ENCODE measurements at regions of chrX and their contacts with region 1.

Region 1: DNA sequence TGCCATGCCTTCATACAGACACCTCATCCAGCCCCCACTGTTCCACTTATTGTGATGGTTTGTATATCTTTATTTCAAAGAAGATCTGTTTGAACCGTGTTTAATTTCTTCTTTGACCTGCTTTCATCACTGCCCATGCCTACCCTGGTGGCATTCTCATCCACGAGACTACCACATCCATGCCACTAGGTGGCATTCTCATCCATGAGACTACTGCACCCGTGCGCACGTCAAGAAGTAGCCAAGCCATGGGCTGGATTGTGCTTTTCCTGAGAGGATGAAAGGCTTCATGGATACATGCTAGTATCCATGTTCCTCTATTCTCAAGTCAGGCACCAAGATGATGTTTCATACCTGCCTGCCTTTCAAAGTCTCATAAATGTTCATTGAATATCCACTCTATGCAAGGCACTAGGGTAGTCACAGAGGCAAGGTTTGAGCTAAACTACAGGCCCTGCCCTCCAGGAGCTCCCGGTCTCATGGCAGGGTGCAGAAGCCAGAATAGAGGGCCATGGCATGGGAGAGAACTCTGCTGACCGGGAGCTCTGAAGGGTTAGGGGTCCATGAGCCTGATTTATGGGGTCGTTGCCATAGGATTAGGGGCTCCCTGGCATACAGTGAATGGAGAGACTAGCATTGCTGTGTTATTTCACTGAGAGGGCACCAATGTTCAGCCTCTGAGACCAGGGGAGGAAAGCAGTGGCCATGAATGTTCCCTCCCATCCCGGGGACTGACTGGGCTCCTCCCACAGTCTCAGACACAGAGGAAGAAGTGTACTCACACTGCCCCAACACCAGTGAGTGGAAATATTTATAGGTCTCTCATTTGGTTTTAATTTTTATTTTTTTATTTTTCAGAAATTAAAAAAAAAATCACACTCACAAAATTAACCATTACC is 24.8 kb upstream of the EOLA2 start:
- DNase-seq: peak; percentile 28
- H3K4me3 ChIP-seq: no peak overlapping the region
- H3K27ac ChIP-seq: no peak overlapping the region
- H3K4me1 ChIP-seq: no peaks in the 10 kb centered on the region
- H3K27me3 ChIP-seq: no peaks in the 10 kb centered on the region
- CTCF ChIP-seq: peak; percentile 46 to 57 (median 50)
- EP300 ChIP-seq: no peak
- POLR2A ChIP-seq: no peak

Region 2: DNA sequence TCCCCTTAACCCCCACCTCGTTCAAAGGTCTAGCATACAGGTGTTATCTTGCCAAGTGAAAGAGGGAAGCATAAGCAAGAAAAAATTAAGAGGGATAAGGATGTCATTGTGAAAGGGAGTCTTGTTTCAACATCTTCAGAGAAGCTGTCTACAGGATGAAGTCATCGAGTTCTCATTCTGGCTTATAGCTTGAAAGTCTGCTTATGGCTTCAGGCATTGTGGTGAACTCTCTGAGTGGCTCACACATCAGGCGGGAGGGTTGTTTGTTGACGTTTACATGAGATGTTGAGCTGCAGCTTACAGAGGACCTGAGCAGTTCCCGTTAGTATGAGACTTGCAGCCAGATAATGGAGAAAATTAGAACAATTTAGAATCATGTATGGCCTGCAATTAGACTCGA is 392.4 kb before region 1 on chrX:
- in situ Hi-C with region 1: no loop called
- intact Hi-C with region 1: no loop called
- DNase-seq: no peak
- H3K4me3 ChIP-seq: no peak overlapping the region
- H3K27ac ChIP-seq: no peak overlapping the region
- H3K4me1 ChIP-seq: no peaks in the 10 kb centered on the region
- H3K27me3 ChIP-seq: no peaks in the 10 kb centered on the region
- CTCF ChIP-seq: no peak
- EP300 ChIP-seq: no peak
- POLR2A ChIP-seq: no peak

Region 3: DNA sequence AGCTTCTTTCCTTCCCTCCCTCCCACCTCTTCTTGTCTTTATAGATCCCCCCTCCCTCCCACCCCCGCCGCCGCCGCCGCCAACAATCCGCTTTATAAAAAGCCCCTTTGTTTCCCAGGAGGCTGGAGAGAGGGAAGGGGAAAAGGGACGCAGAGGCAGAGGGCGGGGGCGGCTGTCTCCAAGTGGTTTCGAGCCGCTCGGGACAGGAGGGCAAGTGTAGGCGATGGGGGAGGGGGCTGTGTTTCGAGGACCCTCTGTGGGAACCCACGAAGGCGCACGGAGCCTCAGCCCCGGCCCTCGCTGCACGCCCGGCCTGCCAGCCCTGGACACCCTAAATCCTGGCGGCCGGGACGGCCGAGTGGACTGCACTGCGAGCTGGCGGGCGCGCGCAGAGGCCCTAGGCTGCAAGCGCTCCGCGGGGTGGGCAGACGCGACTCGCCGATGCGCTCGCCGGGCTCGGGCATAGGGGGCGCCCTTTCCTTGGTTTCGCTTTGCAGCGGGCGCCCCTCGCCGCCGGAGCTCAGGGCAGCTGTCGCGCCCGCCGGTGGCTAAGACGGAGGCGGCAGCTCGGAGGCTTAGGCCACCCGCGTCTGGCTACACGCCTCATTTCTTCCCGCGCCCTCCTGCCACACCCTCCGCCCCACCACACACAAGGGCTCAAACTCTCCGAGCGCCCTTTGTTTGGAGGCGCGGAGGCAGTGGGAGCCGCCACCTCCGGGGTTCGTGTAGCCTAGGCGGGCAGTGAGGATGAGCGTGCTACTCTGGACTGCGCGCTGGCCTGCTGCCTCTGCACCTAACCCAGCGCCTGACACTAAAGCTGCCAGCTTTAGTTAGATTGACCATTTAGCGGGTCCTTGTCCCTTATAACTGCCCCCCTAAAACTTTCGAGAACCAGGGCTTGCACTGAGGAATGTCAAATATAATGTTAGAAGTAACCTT is 402.2 kb after region 1 on chrX:
- in situ Hi-C with region 1: loop called in 2 of 4 experiments (anchors 25 kb)
- intact Hi-C with region 1: no loop called
- DNase-seq: peak; percentile 65
- H3K4me3 ChIP-seq: peak overlapping the region; percentile 42 to 68 (median 43)
- H3K27ac ChIP-seq: peak overlapping the region; percentile 79 to 88 (median 85)
- H3K4me1 ChIP-seq: peaks cover 0 to 28% (median 9%) of the 10 kb centered on the region in 4 donors
- H3K27me3 ChIP-seq: peaks cover 34% of the 10 kb centered on the region
- CTCF ChIP-seq: peak; percentile 31 to 43 (median 42)
- EP300 ChIP-seq: no peak
- POLR2A ChIP-seq: peak; percentile 17

Region 4: DNA sequence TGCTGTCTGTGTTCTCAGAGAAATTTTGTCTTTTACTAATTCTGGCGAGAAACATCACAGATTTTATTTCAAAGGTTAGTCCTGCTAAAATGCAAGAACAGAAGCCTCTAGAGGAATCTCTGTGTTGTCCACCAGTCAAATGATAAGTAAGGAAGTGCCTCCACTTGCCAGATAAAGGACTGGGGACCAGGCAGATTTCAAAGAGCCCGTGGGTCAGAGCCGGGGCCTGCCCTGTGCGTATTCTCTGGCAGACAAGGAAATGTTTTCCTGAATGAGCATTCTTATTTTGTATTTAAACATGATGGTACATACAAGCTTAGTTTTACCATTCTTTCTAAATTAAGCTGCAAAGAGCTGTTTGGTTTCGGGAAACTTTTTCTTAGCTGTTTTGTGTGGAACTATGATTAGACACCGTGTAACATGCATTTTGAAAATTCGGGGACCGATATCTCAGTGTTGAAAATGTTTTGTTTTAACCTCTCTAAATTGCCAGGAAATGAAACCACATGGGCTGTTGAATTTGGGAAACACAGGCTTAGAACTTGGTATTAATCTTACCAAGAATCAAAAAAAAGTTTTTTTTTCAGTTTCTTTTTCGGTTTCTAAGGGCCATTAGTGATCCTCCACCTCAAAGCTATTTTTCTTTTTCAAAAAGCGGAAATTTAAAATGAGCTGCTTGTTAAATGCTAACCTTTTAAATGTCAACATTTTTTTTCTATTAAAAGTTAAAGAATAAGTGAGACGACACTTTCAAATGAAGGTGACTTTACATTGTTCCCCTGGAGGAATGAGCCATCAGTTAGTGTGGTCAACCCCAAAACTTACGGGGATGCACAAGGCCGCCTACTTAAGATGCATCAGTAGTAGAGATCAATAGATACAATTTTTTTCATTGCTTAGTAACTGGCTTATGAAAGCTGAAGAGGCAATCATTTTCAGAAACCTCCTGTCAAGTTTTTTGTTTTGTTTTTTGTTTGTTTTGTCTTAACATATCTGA is 515.7 kb after region 1 on chrX:
- in situ Hi-C with region 1: loop called in 2 of 4 experiments (anchors 25 kb)
- intact Hi-C with region 1: loop called (anchors 5 kb)
- DNase-seq: no peak
- H3K4me3 ChIP-seq: no peak overlapping the region
- H3K27ac ChIP-seq: no peak overlapping the region
- H3K4me1 ChIP-seq: no peaks in the 10 kb centered on the region
- H3K27me3 ChIP-seq: no peaks in the 10 kb centered on the region
- CTCF ChIP-seq: no peak
- EP300 ChIP-seq: no peak
- POLR2A ChIP-seq: no peak

Region 5: DNA sequence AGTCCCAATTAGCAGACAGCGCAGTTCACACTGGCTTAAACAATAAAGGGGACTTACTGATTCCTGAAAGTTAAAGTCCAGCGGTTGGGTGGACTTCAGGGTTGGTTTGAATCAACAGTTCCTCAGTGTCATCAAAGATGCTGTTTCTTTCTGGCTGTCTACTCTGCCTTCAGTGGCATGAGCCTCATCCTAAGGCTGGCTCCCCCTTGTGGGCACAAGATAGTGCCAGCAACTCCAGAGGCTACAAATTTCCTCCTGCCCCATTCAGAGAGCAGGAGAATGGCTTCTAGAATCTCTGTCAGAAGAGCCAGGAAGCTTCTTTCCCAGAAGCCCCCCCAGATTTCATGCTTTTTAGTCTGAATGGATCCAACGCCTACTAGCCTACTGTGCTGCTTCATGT is 522.9 kb after region 1 on chrX:
- in situ Hi-C with region 1: loop called in 2 of 4 experiments (anchors 25 kb)
- intact Hi-C with region 1: no loop called
- DNase-seq: peak; percentile 50
- H3K4me3 ChIP-seq: no peak overlapping the region
- H3K27ac ChIP-seq: no peak overlapping the region
- H3K4me1 ChIP-seq: no peaks in the 10 kb centered on the region
- H3K27me3 ChIP-seq: no peaks in the 10 kb centered on the region
- CTCF ChIP-seq: peak; percentile 39 to 49 (median 46)
- EP300 ChIP-seq: no peak
- POLR2A ChIP-seq: no peak

Region 6: DNA sequence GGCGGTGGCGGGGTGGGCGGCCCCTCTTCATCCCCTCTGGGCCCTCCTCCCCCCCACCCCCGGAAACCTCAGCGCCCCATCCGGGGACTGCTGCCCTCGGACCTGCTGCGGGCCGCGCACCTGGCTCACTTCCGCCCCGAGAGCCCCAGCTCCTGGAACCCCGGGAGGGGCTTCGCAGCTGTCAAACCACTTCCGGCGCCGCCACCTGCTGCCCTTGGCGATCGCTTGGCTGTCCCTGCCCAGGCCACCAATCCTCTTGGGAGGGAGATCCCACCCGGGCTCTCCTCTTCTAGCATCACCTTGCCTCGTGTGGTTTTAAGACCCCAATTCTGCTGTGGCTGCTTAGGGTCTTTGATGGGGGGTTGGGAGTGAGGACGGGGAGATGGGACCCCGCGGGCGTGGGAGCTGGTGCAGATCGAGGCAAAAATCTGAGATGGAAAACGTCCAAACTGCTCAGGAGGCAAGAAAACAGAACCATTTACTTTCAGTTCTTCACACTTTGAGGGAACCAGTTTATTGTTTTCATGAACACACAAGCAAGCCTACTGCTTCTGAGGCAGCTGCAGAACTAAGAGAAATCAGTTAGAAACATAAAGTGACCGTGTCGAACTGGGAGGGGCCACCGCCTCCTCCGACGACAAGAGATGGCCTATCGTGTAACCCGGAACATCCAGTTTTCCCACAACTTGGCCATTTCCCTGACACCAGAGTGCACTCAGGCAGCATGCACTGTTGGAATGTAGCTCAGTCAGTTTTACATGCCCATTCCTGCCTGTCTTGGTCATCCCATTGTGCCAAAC is 730.9 kb after region 1 on chrX:
- in situ Hi-C with region 1: loop called in 1 of 4 experiments (anchors 25 kb)
- intact Hi-C with region 1: loop called (anchors 10 kb)
- DNase-seq: peak; percentile 80
- H3K4me3 ChIP-seq: peak overlapping the region; percentile 43 to 61 (median 54)
- H3K27ac ChIP-seq: peak overlapping the region; percentile 79 to 90 (median 86)
- H3K4me1 ChIP-seq: peaks cover 0 to 11% (median 3%) of the 10 kb centered on the region in 4 donors
- H3K27me3 ChIP-seq: no peaks in the 10 kb centered on the region
- CTCF ChIP-seq: no peak
- EP300 ChIP-seq: no peak
- POLR2A ChIP-seq: no peak

Region 7: DNA sequence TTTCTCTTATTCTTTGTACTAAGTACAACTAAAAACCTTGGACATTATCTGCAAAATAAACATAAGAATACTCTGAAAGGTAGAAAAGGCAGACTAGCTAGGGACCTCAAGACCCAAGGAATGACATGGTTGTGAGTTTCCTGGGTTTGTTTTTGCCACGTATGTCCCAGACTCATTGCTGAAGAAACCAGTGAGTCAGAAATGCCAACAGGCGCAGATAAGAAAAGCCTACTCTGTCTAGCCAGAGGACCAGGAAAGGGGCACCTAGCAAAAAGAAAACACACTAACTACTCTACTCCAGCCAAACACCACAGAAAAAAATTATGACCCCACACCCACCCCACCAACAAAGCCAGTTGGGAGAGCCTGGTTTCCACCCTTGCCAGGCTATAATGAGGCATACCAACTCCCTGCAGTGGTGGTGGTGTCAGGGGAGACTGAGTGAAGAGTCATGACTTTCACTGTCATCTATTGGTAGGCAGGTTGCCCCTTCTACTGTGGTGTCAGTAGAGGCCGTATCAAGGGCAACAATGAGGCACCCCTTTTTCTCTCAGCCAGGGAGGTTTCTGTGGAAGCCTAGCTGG is 741.0 kb after region 1 on chrX:
- in situ Hi-C with region 1: loop called in 2 of 4 experiments (anchors 25 kb)
- intact Hi-C with region 1: loop called (anchors 10 kb)
- DNase-seq: no peak
- H3K4me3 ChIP-seq: no peak overlapping the region
- H3K27ac ChIP-seq: no peak overlapping the region
- H3K4me1 ChIP-seq: no peaks in the 10 kb centered on the region
- H3K27me3 ChIP-seq: no peaks in the 10 kb centered on the region
- CTCF ChIP-seq: no peak
- EP300 ChIP-seq: no peak
- POLR2A ChIP-seq: no peak